GM12878 (cell line): ENCODE measurements at regions of chr7 and their contacts with region 1.

Region 1: DNA sequence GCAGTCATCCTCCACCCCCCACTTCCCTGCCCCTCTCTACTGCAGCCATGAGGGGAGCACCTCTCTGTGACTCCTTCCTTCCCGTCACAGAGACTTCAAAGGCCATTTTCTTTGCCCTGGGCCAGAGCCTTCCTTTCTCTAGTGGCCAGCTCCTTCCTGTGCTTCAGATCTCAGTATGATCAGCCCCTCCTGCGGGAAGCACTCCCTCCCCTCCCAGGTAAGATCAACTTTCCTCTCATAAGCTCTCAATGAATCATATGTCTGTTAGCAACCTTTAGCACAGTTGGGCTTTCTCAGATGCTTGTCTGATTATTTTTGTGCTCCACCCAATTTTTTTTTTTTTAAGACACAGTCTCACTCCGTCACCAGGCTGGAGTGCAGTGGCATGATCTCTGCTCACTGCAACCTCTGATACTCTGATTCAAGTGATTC is 241.0 kb upstream of the PRSS1 start:
- DNase-seq: no peak
- ATAC-seq: no peak
- H3K4me3 ChIP-seq: no peak overlapping the region
- H3K27ac ChIP-seq: no peak overlapping the region
- H3K4me1 ChIP-seq: no peaks in the 10 kb centered on the region
- H3K27me3 ChIP-seq: peaks cover 0 to 1% of the 10 kb centered on the region in 2 experiments; a peak in 2 of 4 replicates
- CTCF ChIP-seq: no peak
- EP300 ChIP-seq: no peak
- POLR2A ChIP-seq: no peak
- RAD21 ChIP-seq: no peak

Region 2: GRCh38 chr7:142254995-142255394 is 253.3 kb before region 1 on chr7:
- CTCF ChIA-PET with region 1: no interaction called
- POLR2A ChIA-PET with region 1: no interaction called
- RAD21 ChIA-PET with region 1: no interaction called
- SMC1A ChIA-PET with region 1: no interaction called
- in situ Hi-C with region 1: no loop called
- intact Hi-C with region 1: no loop called
- DNase-seq: no peak
- ATAC-seq: no peak
- H3K4me3 ChIP-seq: no peak overlapping the region
- H3K27ac ChIP-seq: no peak overlapping the region
- H3K4me1 ChIP-seq: no peaks in the 10 kb centered on the region
- H3K27me3 ChIP-seq: no peaks in the 10 kb centered on the region
- CTCF ChIP-seq: no peak
- EP300 ChIP-seq: no peak
- POLR2A ChIP-seq: no peak
- RAD21 ChIP-seq: no peak

Region 3: GRCh38 chr7:142405122-142405765 is 103.0 kb before region 1 on chr7:
- CTCF ChIA-PET with region 1: no interaction called
- POLR2A ChIA-PET with region 1: no interaction called
- RAD21 ChIA-PET with region 1: no interaction called
- SMC1A ChIA-PET with region 1: no interaction called
- in situ Hi-C with region 1: no loop called
- intact Hi-C with region 1: no loop called
- DNase-seq: no peak
- ATAC-seq: no peak
- H3K4me3 ChIP-seq: no peak overlapping the region
- H3K27ac ChIP-seq: no peak overlapping the region
- H3K4me1 ChIP-seq: no peaks in the 10 kb centered on the region
- H3K27me3 ChIP-seq: peaks cover 0 to 3% of the 10 kb centered on the region in 2 experiments; a peak in 2 of 4 replicates
- CTCF ChIP-seq: no peak
- EP300 ChIP-seq: no peak
- POLR2A ChIP-seq: no peak
- RAD21 ChIP-seq: no peak

Region 4: DNA sequence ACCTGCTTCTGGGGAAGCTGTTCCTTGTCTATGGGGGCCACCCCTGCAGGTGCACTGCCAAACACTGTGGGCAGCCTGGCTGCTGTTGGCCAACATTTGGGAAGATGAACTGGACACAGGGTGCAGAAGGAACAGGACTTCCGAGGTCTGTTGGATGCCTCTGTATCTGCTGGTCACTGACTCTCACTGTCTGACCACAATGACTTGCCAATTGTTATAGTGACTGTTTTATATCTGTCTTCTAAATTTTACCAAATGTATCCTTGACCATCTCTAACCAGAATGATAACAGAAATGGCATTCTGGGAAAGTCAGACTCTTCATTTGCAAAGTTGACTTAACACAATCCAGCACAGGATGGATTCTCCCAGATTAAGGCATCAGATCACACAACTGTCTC is 36.5 kb before region 1 on chr7:
- CTCF ChIA-PET with region 1: no interaction called
- POLR2A ChIA-PET with region 1: no interaction called
- RAD21 ChIA-PET with region 1: no interaction called
- SMC1A ChIA-PET with region 1: no interaction called
- in situ Hi-C with region 1: no loop called
- intact Hi-C with region 1: loop called (anchors 1 kb)
- DNase-seq: no peak
- ATAC-seq: no peak
- H3K4me3 ChIP-seq: no peak overlapping the region
- H3K27ac ChIP-seq: no peak overlapping the region
- H3K4me1 ChIP-seq: no peaks in the 10 kb centered on the region
- H3K27me3 ChIP-seq: no peaks in the 10 kb centered on the region
- CTCF ChIP-seq: no peak
- EP300 ChIP-seq: no peak
- POLR2A ChIP-seq: no peak
- RAD21 ChIP-seq: no peak

Region 5: DNA sequence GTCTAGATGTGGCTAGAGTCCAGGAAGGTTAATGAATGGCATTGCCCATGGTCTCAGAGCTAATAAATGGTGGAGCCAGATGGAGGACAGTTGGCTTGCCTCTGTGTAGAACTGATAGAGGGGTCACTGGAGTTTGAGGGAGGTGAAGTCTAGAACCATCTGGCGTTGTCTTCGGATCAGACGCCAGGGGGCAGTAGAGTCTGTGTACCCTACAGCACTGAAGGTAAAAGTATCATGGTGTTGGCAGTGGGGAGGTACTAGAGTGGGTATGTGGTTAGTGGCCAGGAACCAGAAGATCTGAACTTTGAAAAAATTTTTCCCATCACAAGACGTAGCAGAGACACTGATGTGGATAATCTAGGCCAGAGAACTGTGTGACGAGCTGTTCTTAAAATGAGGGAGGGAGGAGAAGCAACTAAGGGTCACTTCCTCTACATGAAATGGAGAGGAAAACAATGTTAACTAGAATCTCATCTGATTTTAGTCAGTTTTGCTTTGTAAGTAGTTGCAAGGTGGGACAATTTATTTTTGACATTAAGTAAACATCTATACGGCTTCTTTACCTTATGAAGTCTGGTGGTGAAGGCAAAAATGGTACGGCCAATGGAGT is 22.6 kb before region 1 on chr7:
- CTCF ChIA-PET with region 1: interaction called, 11 read pairs
- POLR2A ChIA-PET with region 1: no interaction called
- RAD21 ChIA-PET with region 1: interaction called, 3 read pairs
- SMC1A ChIA-PET with region 1: interaction called, 4 read pairs
- in situ Hi-C with region 1: no loop called
- intact Hi-C with region 1: no loop called
- DNase-seq: no peak
- ATAC-seq: peak; percentile 57; the same call in 2 of the 3 replicates
- H3K4me3 ChIP-seq: no peak overlapping the region
- H3K27ac ChIP-seq: no peak overlapping the region
- H3K4me1 ChIP-seq: no peaks in the 10 kb centered on the region; the same call in 1 of the 2 replicates
- H3K27me3 ChIP-seq: no peaks in the 10 kb centered on the region; a peak in 1 of 4 replicates
- CTCF ChIP-seq: peak; percentile 1 to 45 (median 33); a peak in 3 of 6 replicates
- EP300 ChIP-seq: no peak
- POLR2A ChIP-seq: no peak
- RAD21 ChIP-seq: no peak

Region 6: GRCh38 chr7:142771353-142771723 is 263.1 kb after region 1 on chr7:
- CTCF ChIA-PET with region 1: no interaction called
- POLR2A ChIA-PET with region 1: no interaction called
- RAD21 ChIA-PET with region 1: no interaction called
- SMC1A ChIA-PET with region 1: no interaction called
- in situ Hi-C with region 1: no loop called
- intact Hi-C with region 1: no loop called
- DNase-seq: peak; percentile 73
- ATAC-seq: peak; percentile 89
- H3K4me3 ChIP-seq: no peak overlapping the region
- H3K27ac ChIP-seq: no peak overlapping the region
- H3K4me1 ChIP-seq: peaks cover 19% of the 10 kb centered on the region
- H3K27me3 ChIP-seq: no peaks in the 10 kb centered on the region
- CTCF ChIP-seq: no peak
- EP300 ChIP-seq: peak; percentile 43 to 51; a peak in 2 of 4 replicates
- POLR2A ChIP-seq: no peak
- RAD21 ChIP-seq: no peak

Region 7: GRCh38 chr7:144011458-144012230 is 1503.4 kb after region 1 on chr7:
- CTCF ChIA-PET with region 1: no interaction called
- POLR2A ChIA-PET with region 1: no interaction called
- RAD21 ChIA-PET with region 1: no interaction called
- SMC1A ChIA-PET with region 1: no interaction called
- in situ Hi-C with region 1: no loop called
- intact Hi-C with region 1: no loop called
- DNase-seq: no peak
- ATAC-seq: no peak
- H3K4me3 ChIP-seq: no peak overlapping the region
- H3K27ac ChIP-seq: no peak overlapping the region
- H3K4me1 ChIP-seq: no peaks in the 10 kb centered on the region
- H3K27me3 ChIP-seq: no peaks in the 10 kb centered on the region
- CTCF ChIP-seq: peak in 2 of 3 experiments; percentile 9 to 15; a peak in 2 of 6 replicates
- EP300 ChIP-seq: no peak
- POLR2A ChIP-seq: no peak
- RAD21 ChIP-seq: peak; percentile 31